A673 (cell line): ENCODE measurements at regions of chr18 and their contacts with region 1.

Region 1: GRCh38 chr18:3832025-3832638 is 382.2 kb downstream of the TGIF1 start:
- DNase-seq: peak; percentile 78
- H3K4me3 ChIP-seq: no peak overlapping the region
- H3K27ac ChIP-seq: peak overlapping the region; percentile 98
- H3K4me1 ChIP-seq: peaks cover 84% of the 10 kb centered on the region
- H3K27me3 ChIP-seq: no peaks in the 10 kb centered on the region
- CTCF ChIP-seq: no peak

Region 2: GRCh38 chr18:3397071-3397745 is 434.9 kb before region 1 on chr18:
- CTCF ChIA-PET with region 1: no interaction called
- POLR2A ChIA-PET with region 1: no interaction called
- intact Hi-C with region 1: no loop called
- DNase-seq: no peak
- H3K4me3 ChIP-seq: no peak overlapping the region
- H3K27ac ChIP-seq: no peak overlapping the region
- H3K4me1 ChIP-seq: no peaks in the 10 kb centered on the region
- H3K27me3 ChIP-seq: no peaks in the 10 kb centered on the region
- CTCF ChIP-seq: no peak

Region 3: DNA sequence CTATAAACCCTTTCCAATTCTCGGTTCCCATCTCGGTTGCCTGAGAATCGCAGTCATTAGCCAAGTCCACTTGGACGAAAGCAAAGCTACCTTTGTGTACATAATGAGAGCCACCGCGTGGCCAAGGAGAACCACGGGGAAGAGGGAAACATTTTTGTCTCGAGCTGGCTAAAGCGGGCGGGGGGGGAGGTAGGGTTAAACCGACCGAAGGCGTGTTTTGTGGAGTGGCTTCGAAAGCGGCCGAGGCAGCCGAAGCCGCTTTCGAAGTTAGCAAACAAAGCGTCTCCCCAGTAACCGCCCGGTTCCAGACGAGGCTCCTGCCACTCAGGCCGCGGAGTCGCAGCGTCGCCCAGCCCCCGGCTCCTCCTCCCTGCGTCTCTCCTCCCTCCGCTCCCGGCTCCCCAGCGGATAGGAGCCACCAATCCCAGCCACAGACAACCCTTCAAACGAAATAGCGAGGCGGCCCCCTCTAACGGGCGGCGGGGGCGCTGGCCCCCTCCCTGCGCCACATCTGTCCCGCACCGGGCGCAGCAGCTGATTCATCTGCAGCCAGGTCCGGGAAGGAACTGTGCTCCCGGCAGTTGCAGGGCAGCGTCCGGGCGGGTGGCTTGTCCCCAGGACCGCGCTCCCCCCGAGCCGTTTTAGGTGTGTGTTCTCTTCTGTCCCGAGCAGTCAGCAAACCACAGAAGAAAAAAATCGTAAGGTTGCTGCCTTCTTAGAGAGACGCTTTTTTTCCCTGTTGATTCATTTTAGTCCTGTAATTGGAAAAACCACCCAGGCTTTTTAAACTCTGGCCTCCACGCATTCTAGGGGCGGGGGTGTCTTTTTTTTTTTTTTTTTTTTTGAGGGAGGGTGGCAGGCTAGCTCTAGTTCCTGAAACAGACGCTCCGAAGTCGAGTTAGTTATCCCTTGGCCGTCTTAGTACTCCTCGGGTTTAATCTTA is 384.0 kb before region 1 on chr18:
- CTCF ChIA-PET with region 1: no interaction called
- POLR2A ChIA-PET with region 1: no interaction called
- intact Hi-C with region 1: loop called (anchors 5 kb)
- DNase-seq: peak; percentile 99
- H3K4me3 ChIP-seq: peak overlapping the region; percentile 91
- H3K27ac ChIP-seq: peak overlapping the region; percentile 96
- H3K4me1 ChIP-seq: peaks cover 23% of the 10 kb centered on the region
- H3K27me3 ChIP-seq: no peaks in the 10 kb centered on the region
- CTCF ChIP-seq: 0 out of 2 replicates have a peak, but pooled peaks have one; percentile 15

Region 4: DNA sequence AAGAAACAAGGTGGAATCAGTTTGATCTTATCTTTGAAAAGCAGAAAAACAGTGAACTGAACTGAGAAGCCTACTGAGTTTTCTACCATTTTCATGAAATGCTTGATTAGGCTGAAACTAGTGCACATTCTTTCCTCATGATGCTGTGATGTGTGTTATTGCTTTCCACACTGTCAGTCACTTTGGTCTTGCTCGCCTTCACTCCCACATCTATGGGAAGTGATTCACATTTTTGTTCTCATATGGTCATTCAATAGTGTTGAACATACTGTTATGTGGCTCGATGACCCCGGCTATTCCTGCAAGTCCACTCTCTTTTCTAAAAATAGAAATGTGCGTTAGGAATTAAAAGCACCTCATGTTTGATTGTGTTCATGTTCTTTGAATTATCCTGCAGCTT is 252.4 kb before region 1 on chr18:
- CTCF ChIA-PET with region 1: no interaction called
- POLR2A ChIA-PET with region 1: no interaction called
- intact Hi-C with region 1: no loop called
- DNase-seq: no peak
- H3K4me3 ChIP-seq: no peak overlapping the region
- H3K27ac ChIP-seq: no peak overlapping the region
- H3K4me1 ChIP-seq: peaks cover 9% of the 10 kb centered on the region
- H3K27me3 ChIP-seq: no peaks in the 10 kb centered on the region
- CTCF ChIP-seq: no peak

Region 5: DNA sequence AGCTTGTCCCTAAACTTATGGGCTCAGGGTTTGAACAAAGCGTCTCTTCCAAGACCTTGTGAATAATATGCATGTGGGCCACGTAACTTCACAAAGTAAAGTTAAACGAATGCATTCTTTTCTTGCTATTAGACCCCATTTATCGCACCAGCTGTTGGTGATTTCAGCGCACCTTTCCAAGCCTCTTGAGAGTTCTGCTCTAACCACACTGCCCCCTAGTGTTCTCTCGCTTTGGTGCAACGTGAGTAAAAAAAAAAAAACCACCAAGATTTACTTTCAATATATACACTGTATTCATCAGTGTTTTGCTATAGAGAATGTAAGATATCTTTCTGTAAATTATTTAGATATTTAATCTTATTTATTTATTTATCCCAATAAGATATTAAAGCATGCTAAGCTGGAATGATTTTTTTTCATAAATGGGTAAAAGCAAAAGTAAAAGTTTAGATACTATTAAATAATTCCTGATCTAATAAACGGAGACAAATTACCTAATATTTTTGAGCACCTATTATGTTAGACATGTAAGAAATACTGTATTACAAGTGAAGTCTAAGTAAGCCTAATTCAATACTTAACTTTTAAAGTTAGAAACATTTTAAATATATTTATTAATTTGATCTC is 163.5 kb after region 1 on chr18:
- CTCF ChIA-PET with region 1: interaction called, 6 read pairs
- POLR2A ChIA-PET with region 1: no interaction called
- intact Hi-C with region 1: loop called (anchors 2 kb)
- DNase-seq: peak; percentile 93
- H3K4me3 ChIP-seq: peak overlapping the region; percentile 13
- H3K27ac ChIP-seq: peak overlapping the region; percentile 83
- H3K4me1 ChIP-seq: peaks cover 48% of the 10 kb centered on the region
- H3K27me3 ChIP-seq: no peaks in the 10 kb centered on the region
- CTCF ChIP-seq: peak; percentile 92